Activated T-helper 1 cell treated with anti-CD3 and anti-CD28 coated beads, Interleukin-12 subunit alpha, Interleukin-12 subunit beta, Interleukin-2, Interleukin-4 antibody, amounts not matched to agents 30 ng/mL and 10 ng/mL and 1 ng/mL, durations not matched to agents 14 hours and 24 hours and 36 hours (primary cell): ENCODE measurements at regions of chr9 and their contacts with region 1.

Region 1: DNA sequence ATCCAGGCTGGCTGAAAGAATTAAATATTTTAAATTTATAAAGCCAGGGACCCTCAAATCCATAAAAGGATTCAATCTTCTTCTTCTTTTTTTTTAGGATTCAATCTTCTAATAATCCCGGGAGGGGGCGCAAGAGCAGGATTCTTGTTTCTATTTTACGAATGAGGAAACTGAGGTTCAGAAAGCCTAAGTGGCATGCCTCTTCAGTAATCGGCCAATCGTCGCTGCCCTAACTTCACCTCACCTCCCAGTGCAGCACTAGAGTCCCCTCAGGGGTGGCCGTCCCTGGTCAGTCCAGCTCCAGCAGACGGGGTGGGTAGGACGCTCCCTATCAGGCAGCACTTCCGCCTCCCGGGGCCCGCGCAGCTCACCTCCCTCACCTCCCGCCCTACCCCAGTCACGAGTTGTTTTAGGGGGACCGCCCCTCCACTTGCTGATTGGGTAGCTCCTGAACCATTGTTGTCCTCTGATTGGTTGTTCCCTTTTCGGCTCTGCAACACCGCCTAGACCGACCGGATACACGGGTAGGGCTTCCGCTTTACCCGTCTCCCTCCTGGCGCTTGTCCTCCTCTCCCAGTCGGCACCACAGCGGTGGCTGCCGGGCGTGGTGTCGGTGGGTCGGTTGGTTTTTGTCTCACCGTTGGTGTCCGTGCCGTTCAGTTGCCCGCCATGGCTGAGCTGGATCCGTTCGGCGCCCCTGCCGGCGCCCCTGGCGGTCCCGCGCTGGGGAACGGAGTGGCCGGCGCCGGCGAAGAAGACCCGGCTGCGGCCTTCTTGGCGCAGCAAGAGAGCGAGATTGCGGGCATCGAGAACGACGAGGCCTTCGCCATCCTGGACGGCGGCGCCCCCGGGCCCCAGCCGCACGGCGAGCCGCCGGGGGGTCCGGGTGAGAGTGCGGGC is at the start of gene CLTA:
- DNase-seq: peak; percentile 94
- H3K4me3 Mint-ChIP-seq: peak within 1 kb of the TSS; percentile 96
- H3K27ac Mint-ChIP-seq: peak within 1 kb of the TSS; percentile 78
- H3K4me1 Mint-ChIP-seq: peaks cover 56% of the 10 kb centered on the region
- H3K27me3 Mint-ChIP-seq: peaks cover 4% of the 10 kb centered on the region
- total RNA-seq, gene CLTA: 175 and 182 TPM in 2 replicates

Region 2: GRCh38 chr9:35732122-35732799 is 458.4 kb before region 1 on chr9 and contains the starts of genes CREB3 and TLN1:
- intact Hi-C with region 1: loop called (anchors 1 kb)
- DNase-seq: peak; percentile 98
- H3K4me3 Mint-ChIP-seq: no peak within 1 kb of the TSS
- H3K27ac Mint-ChIP-seq: peak within 1 kb of the TSS; percentile 92
- H3K4me1 Mint-ChIP-seq: peaks cover 22% of the 10 kb centered on the region
- H3K27me3 Mint-ChIP-seq: no peaks in the 10 kb centered on the region
- total RNA-seq, gene CREB3: 32.1 and 32.6 TPM in 2 replicates
- total RNA-seq, gene TLN1: 229 and 230 TPM in 2 replicates

Region 3: DNA sequence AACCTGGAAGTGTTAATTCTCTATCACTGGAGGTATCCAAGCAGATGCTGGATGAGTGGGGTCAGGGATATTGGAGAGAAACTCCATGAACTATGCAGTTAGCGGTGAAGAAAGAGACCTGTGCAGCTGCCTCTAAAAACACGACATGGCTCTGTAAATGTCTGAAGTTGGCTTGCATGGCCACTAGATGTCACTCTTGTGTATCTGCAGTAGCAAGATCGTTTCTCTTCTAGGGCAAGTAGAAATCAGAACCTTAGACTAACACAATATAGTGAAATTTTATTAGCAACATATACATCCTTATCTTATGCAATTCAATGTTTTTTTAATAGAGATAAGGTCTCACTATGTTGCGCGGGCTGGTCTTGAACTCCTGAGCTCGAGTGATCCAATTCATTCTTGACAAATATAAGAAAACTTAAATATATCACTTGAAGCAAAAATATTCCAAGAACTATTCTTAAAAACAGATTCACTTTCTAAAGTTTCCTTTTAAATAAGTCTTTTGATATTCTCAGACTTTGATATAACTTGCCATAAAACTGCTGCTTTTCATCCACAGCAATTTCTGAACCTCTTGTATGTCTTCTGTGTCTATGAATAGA is 235.6 kb before region 1 on chr9:
- intact Hi-C with region 1: loop called (anchors 1 kb)
- DNase-seq: peak; percentile 25
- H3K4me3 Mint-ChIP-seq: no peak overlapping the region
- H3K27ac Mint-ChIP-seq: no peak overlapping the region
- H3K4me1 Mint-ChIP-seq: peaks cover 6% of the 10 kb centered on the region
- H3K27me3 Mint-ChIP-seq: peaks cover 30% of the 10 kb centered on the region

Region 4: DNA sequence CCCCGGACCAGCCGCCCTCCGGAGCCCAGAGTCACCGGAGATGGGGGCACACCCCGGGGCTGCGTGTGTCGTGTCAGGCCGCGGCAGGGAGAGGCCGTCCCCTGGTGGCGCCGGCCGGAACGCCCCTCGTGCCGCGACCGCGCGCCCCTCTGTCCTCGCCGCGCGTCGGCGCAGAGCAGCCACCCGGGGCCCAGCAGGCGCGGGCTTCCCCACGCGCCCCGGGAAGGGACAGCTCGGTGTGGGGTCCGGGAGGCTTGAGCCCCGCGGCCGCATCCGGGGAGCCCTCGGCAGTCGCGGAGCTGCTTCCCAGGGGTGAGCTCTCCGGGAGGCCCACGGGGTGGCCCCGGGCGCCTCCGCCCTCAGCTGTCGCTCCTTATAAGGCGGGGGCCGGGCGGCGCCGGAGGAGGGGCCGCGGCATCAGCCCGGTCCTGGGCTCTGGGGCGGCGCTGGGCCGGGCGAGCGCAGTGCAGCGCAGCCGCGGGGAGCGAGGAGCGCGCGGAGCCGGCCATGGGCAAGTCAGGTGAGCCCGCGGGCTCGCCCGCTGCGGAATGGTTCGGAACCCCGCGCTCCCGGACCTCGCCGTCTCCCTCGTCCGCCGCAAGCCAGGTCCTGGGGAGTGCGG is 54.3 kb before region 1 on chr9 and contains the start of gene GLIPR2:
- intact Hi-C with region 1: loop called (anchors 2 kb)
- DNase-seq: peak; percentile 81
- H3K4me3 Mint-ChIP-seq: peak within 1 kb of the TSS; percentile 93
- H3K27ac Mint-ChIP-seq: peak within 1 kb of the TSS; percentile 83
- H3K4me1 Mint-ChIP-seq: peaks cover 50% of the 10 kb centered on the region
- H3K27me3 Mint-ChIP-seq: peaks cover 20% of the 10 kb centered on the region
- total RNA-seq, gene GLIPR2: 26.3 and 27.5 TPM in 2 replicates

Region 5: GRCh38 chr9:36204906-36205547 is 14.4 kb after region 1 on chr9:
- intact Hi-C with region 1: loop called (anchors 1 kb)
- DNase-seq: no peak
- H3K4me3 Mint-ChIP-seq: no peak overlapping the region
- H3K27ac Mint-ChIP-seq: no peak overlapping the region
- H3K4me1 Mint-ChIP-seq: peaks cover 56% of the 10 kb centered on the region
- H3K27me3 Mint-ChIP-seq: no peaks in the 10 kb centered on the region

Region 6: DNA sequence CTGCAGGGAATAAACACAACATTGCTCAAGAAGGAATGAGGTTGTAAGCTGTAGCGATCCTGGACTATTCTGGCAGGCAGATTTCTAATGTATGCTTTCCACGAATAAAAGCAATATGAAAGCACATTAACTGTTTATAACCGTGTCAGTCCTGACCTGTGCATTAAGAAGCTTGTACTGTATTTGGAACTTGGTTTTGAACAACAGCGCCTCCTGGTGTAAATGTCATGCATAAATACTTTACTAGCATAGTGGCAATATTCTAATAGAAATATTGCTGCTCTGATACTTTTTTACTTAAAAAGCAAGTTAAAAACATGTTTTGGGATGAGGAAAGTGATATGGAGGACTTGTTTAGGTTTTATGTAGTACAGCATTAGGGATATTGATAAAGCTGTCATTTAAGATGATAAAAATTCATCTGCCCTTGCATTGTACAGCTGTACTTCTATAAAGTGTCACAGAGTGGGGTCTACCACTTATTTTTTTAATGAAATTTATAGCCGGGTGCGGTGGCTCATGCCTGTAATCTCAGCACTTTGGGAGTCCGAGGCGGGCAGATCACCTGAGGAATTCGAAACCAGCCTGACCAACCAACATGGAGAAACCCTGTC is 138.3 kb after region 1 on chr9:
- intact Hi-C with region 1: loop called (anchors 1 kb)
- DNase-seq: peak; percentile 28
- H3K4me3 Mint-ChIP-seq: no peak overlapping the region
- H3K27ac Mint-ChIP-seq: no peak overlapping the region
- H3K4me1 Mint-ChIP-seq: no peaks in the 10 kb centered on the region
- H3K27me3 Mint-ChIP-seq: no peaks in the 10 kb centered on the region

Region 7: DNA sequence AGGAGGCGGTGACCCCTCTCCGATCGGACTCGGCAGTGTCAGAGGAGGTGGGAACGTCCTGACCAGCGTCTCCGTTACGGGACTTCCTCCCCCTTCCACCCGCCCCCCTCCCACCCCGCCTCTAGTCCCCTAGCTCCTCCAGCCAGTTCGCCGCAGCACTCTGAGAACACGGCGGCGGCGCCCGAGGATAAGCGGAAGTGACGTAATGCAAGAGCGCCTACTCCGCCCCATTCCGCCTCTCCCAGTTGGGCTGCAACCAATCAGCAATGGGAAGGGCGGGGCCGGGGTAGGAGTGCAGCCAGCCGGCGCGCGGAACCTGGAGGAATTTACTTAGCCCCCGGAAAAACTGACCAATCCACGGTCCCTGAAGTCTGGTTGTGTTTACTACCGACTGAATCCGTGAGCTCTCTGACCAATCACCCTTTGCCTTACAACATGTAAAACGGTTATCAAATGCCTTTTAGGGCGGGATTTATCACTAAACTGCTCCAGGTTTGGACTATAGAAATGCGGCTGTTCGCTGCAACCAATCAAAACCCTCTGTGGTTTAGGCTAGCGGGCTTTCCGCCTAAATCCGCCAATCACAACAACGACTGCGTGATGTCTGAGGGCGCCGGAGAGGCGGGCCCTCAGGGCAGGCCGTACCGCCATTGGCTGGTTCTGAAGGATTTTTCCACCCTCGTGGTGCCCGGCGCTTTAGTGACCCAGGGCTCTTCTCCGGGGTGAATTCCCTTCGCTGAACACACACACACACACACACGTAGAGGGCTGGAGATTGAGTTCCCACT is 1274.8 kb after region 1 on chr9 and contains the start of gene ZBTB5:
- intact Hi-C with region 1: loop called (anchors 10 kb)
- DNase-seq: peak; percentile 98
- H3K4me3 Mint-ChIP-seq: peak within 1 kb of the TSS; percentile 97
- H3K27ac Mint-ChIP-seq: peak within 1 kb of the TSS; percentile 95
- H3K4me1 Mint-ChIP-seq: peaks cover 47% of the 10 kb centered on the region
- H3K27me3 Mint-ChIP-seq: no peaks in the 10 kb centered on the region
- total RNA-seq, gene ZBTB5: 9.6 and 11.2 TPM in 2 replicates